ENCODE measurements at regions of chr22 and their contacts with region 1.

Region 1: DNA sequence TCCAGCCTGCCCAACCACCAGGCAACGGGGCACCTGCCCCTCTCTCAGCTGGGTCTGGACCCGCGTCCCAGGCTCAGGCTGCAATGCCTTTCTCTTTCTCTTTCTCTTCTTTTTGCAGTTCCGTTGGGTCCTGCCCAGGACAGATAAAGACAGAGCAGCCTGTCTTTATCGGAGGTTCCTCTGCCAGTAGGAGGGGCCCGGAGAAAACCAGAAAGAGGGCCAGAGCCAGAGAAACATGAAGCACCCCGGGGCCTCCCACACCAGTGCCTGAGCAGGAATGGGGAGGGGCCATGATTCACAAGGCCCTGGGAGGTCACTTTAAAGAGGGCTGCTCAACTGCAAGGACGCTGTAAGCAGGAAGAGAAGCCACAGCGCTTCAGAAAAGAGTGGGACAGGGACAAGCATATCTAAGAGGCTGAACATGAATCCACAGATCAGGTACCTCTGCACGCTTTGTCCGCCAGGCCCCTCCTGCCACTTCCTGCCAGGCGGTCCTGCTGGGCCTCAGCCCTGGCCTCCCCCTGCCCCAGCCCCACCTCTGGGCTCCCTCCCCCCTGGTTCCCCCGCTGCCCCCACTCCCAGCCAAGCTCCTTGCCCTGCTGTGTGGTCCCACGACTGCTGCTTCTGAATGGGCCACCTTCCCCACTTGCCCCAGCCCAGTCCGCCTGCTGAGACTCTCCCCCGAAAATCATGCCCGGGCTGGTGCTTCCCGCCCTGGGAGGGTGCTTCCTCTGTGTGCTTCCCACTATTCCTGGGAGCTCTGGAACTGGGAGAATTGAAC is at the start of gene APOBEC3C:
- DNase-seq: peak; percentile 98
- H3K4me3 ChIP-seq: peak within 1 kb of the TSS; percentile 52 to 66 (median 62)
- H3K27ac ChIP-seq: peak within 1 kb of the TSS; percentile 79 to 83 (median 83)
- H3K4me1 ChIP-seq: peaks cover 7 to 23% (median 21%) of the 10 kb centered on the region in 4 donors
- H3K27me3 ChIP-seq: no peaks in the 10 kb centered on the region
- CTCF ChIP-seq: peak in 2 of 3 experiments; percentile 2 to 5
- EP300 ChIP-seq: no peak
- POLR2A ChIP-seq: no peak
- total RNA-seq, gene APOBEC3C: 7.1 to 11.3 (median 8.8) TPM

Region 2: GRCh38 chr22:39117585-39118191 is 103.6 kb after region 1 on chr22:
- intact Hi-C with region 1: loop called (anchors 5 kb)
- DNase-seq: no peak
- H3K4me3 ChIP-seq: no peak overlapping the region
- H3K27ac ChIP-seq: no peak overlapping the region
- H3K4me1 ChIP-seq: no peaks in the 10 kb centered on the region
- H3K27me3 ChIP-seq: peaks cover 0 to 13% (median 0%) of the 10 kb centered on the region in 4 donors
- CTCF ChIP-seq: peak; percentile 19 to 41 (median 32)
- EP300 ChIP-seq: no peak
- POLR2A ChIP-seq: no peak

Region 3: DNA sequence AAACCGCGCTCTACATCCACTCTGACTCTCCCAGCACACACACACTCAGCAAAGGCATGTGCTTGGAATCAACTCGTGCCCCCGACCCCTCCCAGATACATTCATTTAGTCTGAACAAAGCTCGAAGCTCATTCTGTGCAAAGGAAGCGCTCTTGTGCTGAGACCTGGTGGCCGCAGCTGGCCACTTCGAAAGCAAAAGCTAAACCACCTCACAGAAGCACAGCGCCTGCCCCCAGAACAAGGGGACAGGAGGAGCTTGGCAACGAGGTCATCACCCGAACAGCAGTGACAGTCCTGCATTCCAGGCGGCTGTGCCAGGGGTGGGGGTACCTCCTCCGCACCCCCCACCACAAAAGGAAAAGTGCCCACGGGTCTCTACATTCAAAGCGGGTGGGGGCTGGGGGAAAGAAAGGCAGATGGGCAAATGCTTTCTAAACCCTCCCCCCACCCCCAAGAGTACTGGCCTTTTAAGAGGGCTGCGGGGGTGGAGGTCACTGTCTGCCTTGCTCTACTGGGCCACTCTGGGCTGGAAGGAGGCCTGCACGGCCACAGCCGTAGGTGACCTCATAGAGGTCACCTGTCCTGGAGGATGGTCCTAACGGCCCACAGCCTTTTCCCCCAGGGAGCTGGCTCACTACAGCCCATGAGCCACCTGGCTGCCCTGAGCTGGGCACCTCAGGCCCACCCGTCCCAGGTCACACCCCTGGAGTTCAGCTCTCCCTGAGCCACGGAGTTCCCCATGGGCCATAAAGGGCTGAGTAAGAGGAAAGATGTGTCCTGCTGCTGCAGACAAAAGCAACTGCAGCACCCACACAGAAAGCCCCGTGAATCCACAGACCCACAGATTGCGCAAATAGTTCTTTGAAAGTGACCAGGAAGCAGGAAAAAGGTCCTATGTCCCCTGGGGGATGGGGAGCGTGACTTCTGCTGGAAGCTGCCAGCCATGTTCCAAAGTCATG is 117.0 kb after region 1 on chr22:
- intact Hi-C with region 1: no loop called
- DNase-seq: no peak
- H3K4me3 ChIP-seq: no peak overlapping the region
- H3K27ac ChIP-seq: peak overlapping the region in 3 of 4 donors; percentile 38 to 44 (median 40)
- H3K4me1 ChIP-seq: peaks cover 16 to 52% (median 40%) of the 10 kb centered on the region in 4 donors
- H3K27me3 ChIP-seq: no peaks in the 10 kb centered on the region
- CTCF ChIP-seq: no peak
- EP300 ChIP-seq: no peak
- POLR2A ChIP-seq: no peak

Region 4: GRCh38 chr22:39319270-39320022 is 305.3 kb after region 1 on chr22 and contains the start of gene RPL3:
- intact Hi-C with region 1: loop called (anchors 5 kb)
- DNase-seq: peak; percentile 99
- H3K4me3 ChIP-seq: peak within 1 kb of the TSS; percentile 66 to 81 (median 78)
- H3K27ac ChIP-seq: peak within 1 kb of the TSS; percentile 96 to 99 (median 98)
- H3K4me1 ChIP-seq: peaks cover 46 to 54% (median 50%) of the 10 kb centered on the region in 4 donors
- H3K27me3 ChIP-seq: no peaks in the 10 kb centered on the region
- CTCF ChIP-seq: peak in 2 of 3 experiments; percentile 28 to 30
- EP300 ChIP-seq: no peak
- POLR2A ChIP-seq: peak; percentile 97
- total RNA-seq, gene RPL3: 2,019 to 2,284 (median 2,183) TPM

Measured in esophagus muscularis mucosa (tissue), 4 donors.